ENCODE measurements at regions of chr4 and their contacts with region 1.

Region 1: DNA sequence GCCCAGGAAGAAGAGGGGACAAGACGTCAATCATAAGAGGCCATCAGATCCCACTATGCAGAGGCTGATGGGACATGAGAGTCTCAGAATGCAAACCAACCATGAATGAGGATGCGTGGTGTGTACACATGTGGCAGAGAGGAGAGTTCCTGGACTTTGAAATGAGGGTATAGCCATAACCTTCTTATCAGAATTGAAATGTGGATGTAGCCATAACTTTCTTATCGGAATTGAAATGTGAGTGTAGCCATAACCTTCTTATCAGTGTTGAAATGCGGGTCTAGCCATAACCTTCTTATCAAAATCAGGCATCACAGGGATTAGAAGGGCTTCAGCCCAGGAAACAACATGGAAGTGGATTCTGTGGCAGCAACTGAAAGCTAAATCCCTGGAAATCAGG is 415.5 kb upstream of the FAT1 start:
- DNase-seq: no peak
- H3K4me3 ChIP-seq: no peak overlapping the region
- CTCF ChIP-seq: no peak
- POLR2A ChIP-seq: no peak

Region 2: GRCh38 chr4:188107931-188108843 is 969.0 kb after region 1 on chr4:
- intact Hi-C with region 1: loop called (anchors 5 kb)
- DNase-seq: no peak
- H3K4me3 ChIP-seq: no peak overlapping the region
- CTCF ChIP-seq: no peak
- POLR2A ChIP-seq: no peak